B cell (primary cell): ENCODE measurements at regions of chr2 and their contacts with region 1.

Region 1: DNA sequence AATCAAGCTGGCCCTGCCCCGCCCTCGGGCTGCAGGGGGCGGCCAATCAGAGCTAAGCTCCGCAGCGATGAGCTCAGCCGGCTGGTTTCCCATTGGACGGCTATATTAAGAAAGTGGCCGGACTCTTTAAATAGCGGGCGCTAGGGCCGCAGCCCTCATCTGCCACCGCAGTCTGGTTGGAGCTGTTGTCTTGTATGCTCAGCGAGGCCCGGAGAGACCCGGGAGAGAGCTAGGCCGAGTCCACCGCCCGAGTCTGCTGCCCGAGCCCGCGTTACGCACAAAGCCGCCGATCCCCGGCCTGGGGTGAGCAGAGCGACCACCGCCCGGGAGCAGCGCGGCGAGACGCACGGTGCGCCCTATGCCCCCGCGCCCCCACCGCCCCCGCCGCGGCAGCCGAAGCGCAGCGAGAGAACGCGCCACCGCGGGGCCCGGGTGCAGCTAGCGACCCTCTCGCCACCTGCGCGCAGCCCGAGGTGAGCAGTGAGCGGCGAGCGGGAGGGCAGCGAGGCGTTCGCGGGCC is at the start of gene RHOB:
- DNase-seq: peak; percentile 98
- ATAC-seq: peak; percentile 92
- H3K4me3 ChIP-seq: peak within 1 kb of the TSS; percentile 65 to 79 (median 70)
- H3K4me3 Mint-ChIP-seq: peak within 1 kb of the TSS; percentile 95
- H3K27ac ChIP-seq: peak within 1 kb of the TSS; percentile 69 to 92
- H3K27ac Mint-ChIP-seq: peak within 1 kb of the TSS; percentile 96
- H3K4me1 ChIP-seq: peaks cover 15 to 20% of the 10 kb centered on the region in 2 donors
- H3K4me1 Mint-ChIP-seq: peaks cover 18% of the 10 kb centered on the region
- H3K27me3 ChIP-seq: peaks cover 0 to 21% (median 7%) of the 10 kb centered on the region in 4 experiments
- H3K27me3 Mint-ChIP-seq: peaks cover 14% of the 10 kb centered on the region
- CTCF ChIP-seq: no peak
- total RNA-seq, gene RHOB: 63.0 and 65.0 TPM in 2 replicates

Region 2: DNA sequence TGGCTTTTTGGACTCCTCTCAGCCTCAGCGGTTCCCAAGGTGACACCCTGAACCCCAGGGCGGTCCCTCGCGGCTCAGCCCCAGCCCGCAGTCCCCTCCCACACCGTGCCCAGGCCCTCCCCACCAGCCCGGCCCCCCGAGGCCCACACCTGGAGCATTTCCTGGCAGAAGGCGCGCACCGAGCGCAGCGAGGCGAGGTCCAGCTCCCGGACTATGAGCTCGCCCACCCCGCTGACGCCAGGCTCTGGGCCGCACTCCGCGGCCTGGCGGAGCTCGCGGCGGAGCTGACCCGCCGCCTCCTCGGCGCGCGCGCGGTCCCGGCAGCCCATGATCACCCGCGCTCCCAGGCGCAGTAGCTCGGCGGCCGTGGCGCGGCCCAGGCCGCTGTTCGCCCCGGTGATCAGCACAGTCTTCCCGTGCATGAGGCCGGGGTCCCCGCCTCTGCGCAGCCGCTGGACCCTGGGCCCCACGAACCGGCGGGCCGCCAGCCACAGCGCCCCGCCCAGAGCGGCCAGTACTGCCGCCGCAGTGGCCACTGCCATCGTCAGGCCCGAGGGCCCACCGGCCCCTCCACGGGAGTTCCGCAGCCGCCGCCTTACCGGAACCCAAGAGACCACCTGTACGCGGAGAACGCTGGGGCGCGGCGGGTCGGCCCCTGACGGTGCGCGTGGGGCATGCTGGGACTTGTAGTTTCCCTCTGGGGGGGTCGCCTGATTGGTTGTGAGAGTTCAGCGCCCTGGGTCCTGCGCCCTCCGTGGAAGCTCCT is 1886.8 kb before region 1 on chr2 and contains the start of gene RDH14:
- CTCF ChIA-PET with region 1: no interaction called
- POLR2A ChIA-PET with region 1: no interaction called
- intact Hi-C with region 1: loop called (anchors 5 kb)
- DNase-seq: peak; percentile 94
- ATAC-seq: peak; percentile 90
- H3K4me3 ChIP-seq: peak within 1 kb of the TSS; percentile 34 to 79 (median 69)
- H3K4me3 Mint-ChIP-seq: peak within 1 kb of the TSS; percentile 93
- H3K27ac ChIP-seq: peak within 1 kb of the TSS; percentile 71 to 93
- H3K27ac Mint-ChIP-seq: peak within 1 kb of the TSS; percentile 94
- H3K4me1 ChIP-seq: peaks cover 12 to 13% of the 10 kb centered on the region in 2 donors
- H3K4me1 Mint-ChIP-seq: peaks cover 39% of the 10 kb centered on the region
- H3K27me3 ChIP-seq: no peaks in the 10 kb centered on the region
- H3K27me3 Mint-ChIP-seq: no peaks in the 10 kb centered on the region
- CTCF ChIP-seq: no peak
- total RNA-seq, gene RDH14: 18.5 and 19.4 TPM in 2 replicates

Region 3: DNA sequence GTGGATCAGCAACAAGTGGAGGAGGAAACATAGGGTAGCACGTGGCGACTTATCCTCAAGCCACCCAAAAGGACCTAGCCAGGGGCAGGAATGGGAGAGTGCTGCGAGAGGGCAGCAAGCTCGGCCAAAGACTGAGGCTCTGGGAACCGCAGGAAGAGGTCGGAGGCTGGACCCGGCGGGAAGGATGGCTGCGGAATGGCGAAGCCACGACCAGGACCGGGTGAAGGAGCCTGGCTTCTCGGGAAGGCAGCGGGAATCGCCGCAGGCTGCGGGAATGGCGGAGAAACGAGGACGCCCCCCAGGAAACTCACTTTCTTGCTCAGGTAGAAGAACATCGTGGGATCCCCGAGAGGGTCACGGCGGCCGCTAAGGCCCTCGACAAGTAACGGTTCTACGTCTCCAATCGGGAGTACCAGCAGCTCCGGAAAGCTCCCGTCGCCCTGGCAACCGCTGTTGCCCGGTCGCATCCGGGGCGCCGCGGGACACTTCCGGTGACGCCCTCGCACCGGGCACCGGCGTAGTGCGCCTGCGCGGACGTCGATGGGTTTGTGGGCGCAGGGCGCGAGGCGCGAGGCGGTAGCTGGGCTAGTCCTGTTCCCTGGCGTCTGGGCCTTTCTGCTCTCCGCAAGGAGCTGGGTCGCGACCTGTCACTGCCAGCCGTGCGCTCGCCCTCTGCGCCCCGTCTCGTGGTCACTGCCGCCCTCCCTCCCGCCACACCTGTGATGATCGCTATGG is 457.1 kb before region 1 on chr2 and contains the start of gene WDR35:
- CTCF ChIA-PET with region 1: no interaction called
- POLR2A ChIA-PET with region 1: no interaction called
- intact Hi-C with region 1: loop called (anchors 10 kb)
- DNase-seq: peak; percentile 92
- ATAC-seq: peak; percentile 88
- H3K4me3 ChIP-seq: peak within 1 kb of the TSS; percentile 68 to 93 (median 88)
- H3K4me3 Mint-ChIP-seq: peak within 1 kb of the TSS; percentile 91
- H3K27ac ChIP-seq: peak within 1 kb of the TSS; percentile 69 to 77
- H3K27ac Mint-ChIP-seq: peak within 1 kb of the TSS; percentile 89
- H3K4me1 ChIP-seq: peaks cover 16 to 22% of the 10 kb centered on the region in 2 donors
- H3K4me1 Mint-ChIP-seq: peaks cover 28% of the 10 kb centered on the region
- H3K27me3 ChIP-seq: peaks cover 0 to 7% (median 2%) of the 10 kb centered on the region in 4 experiments
- H3K27me3 Mint-ChIP-seq: peaks cover 21% of the 10 kb centered on the region
- CTCF ChIP-seq: no peak
- total RNA-seq, gene WDR35: 9.4 and 11.8 TPM in 2 replicates

Region 4: DNA sequence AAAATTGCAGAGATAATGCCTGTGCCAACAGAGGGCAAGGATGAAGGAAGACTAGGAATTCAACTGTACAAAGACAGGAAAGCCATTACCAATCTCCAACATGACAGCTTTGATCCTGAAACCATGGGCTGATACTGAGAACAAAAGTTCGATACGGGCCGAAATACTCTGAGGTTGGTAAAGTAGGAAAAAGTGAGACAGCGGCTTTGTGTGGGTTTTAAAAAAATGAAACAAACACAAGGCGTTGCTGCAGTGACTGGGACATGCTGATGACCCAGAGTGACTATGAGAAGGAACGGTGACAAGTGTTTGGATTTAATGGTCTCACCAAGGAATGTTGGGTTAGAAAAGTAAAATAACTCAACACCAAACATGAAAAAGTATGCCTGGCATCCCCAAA is 197.8 kb before region 1 on chr2:
- CTCF ChIA-PET with region 1: no interaction called
- POLR2A ChIA-PET with region 1: no interaction called
- intact Hi-C with region 1: no loop called
- DNase-seq: no peak
- ATAC-seq: no peak
- H3K4me3 ChIP-seq: no peak overlapping the region
- H3K4me3 Mint-ChIP-seq: no peak overlapping the region
- H3K27ac ChIP-seq: no peak overlapping the region
- H3K27ac Mint-ChIP-seq: no peak overlapping the region
- H3K4me1 ChIP-seq: no peaks in the 10 kb centered on the region
- H3K4me1 Mint-ChIP-seq: no peaks in the 10 kb centered on the region
- H3K27me3 ChIP-seq: no peaks in the 10 kb centered on the region
- H3K27me3 Mint-ChIP-seq: no peaks in the 10 kb centered on the region
- CTCF ChIP-seq: no peak

Region 5: DNA sequence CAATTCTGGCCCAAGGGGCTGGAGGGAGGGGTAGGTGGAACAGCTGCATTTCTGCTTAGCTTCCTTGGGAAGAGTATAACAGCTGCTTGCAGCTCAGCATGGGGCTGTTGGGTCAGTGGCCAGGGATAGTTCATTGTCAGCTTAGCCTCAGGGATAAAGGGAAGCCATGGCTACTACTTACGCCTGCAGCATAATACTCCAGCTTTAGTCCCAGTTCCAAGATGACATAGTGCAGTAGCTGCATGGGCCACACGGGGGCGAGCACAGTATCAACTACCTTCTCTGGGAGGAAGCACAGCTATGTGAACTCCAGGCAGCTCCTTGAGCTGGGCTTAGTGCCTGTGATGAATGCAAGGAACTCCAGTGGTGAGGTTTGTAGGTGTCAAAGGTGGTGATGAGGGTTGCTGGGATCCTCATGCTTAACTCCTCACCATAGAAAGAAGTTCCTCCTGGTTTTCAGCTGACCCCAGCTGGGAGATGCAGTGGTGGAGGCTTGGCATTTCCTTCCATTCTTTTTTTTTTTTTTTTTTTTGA is 35.5 kb before region 1 on chr2:
- CTCF ChIA-PET with region 1: interaction called, 19 read pairs
- POLR2A ChIA-PET with region 1: interaction called, 5 read pairs
- intact Hi-C with region 1: loop called (anchors 5 kb)
- DNase-seq: peak; percentile 82
- ATAC-seq: peak; percentile 99
- H3K4me3 ChIP-seq: no peak overlapping the region
- H3K4me3 Mint-ChIP-seq: no peak overlapping the region
- H3K27ac ChIP-seq: no peak overlapping the region
- H3K27ac Mint-ChIP-seq: no peak overlapping the region
- H3K4me1 ChIP-seq: no peaks in the 10 kb centered on the region
- H3K4me1 Mint-ChIP-seq: peaks cover 2% of the 10 kb centered on the region
- H3K27me3 ChIP-seq: peaks cover 0 to 12% (median 3%) of the 10 kb centered on the region in 4 experiments
- H3K27me3 Mint-ChIP-seq: peaks cover 9% of the 10 kb centered on the region
- CTCF ChIP-seq: peak; percentile 80

Region 6: DNA sequence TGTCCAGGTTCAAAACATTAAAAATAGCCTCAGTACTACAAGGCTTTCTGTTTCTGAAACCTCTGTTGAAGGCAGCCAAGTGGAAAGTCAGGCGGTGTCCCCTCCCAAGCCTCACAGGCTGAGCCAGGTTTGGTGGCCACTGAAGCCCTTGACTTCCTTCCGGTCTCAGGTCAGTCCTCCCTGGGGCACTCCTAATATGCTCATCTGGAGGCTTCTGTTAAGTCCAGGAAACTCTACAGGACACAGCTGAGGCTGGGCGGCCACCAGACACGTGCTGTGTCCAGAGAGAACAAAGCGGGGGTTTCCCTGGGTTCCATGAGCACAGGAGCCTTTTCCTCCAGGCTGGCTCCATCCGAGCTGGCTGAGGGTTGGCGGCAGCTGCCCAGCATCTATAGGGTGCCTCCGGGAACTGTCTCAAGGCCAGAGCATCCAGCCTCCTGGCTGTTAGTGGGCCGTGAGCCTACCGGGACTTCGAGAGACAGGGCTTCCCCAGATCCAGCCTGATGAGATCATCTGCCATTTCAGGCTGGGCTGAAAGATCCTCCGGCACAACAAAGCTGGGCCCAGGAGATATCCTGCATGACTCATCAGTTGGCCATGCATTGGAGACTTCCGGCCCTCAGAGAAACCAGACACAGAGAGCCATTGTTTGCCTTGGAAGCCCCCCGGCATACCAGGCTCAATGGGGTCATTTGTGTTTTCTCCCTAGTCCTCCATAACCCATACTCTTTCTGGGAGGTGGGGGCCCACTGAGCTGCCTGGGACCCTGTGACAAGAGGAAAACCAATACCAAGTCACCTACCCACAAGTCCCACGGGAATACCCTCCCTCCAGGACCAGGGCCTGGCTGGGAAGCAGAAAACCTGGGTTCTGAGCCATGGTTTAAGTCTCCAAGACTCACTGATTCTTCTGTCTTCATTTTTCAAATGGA is 132.2 kb after region 1 on chr2:
- CTCF ChIA-PET with region 1: interaction called, 7 read pairs
- POLR2A ChIA-PET with region 1: interaction called, 7 read pairs
- intact Hi-C with region 1: loop called (anchors 5 kb)
- DNase-seq: no peak
- ATAC-seq: no peak
- H3K4me3 ChIP-seq: no peak overlapping the region
- H3K4me3 Mint-ChIP-seq: no peak overlapping the region
- H3K27ac ChIP-seq: no peak overlapping the region
- H3K27ac Mint-ChIP-seq: no peak overlapping the region
- H3K4me1 ChIP-seq: peaks cover 27 to 34% of the 10 kb centered on the region in 2 donors
- H3K4me1 Mint-ChIP-seq: peaks cover 23% of the 10 kb centered on the region
- H3K27me3 ChIP-seq: no peaks in the 10 kb centered on the region
- H3K27me3 Mint-ChIP-seq: no peaks in the 10 kb centered on the region
- CTCF ChIP-seq: no peak

Region 7: GRCh38 chr2:20642055-20642971 is 195.3 kb after region 1 on chr2:
- CTCF ChIA-PET with region 1: interaction called, 114 read pairs
- POLR2A ChIA-PET with region 1: interaction called, 16 read pairs
- intact Hi-C with region 1: loop called (anchors 1 kb)
- DNase-seq: peak; percentile 82
- ATAC-seq: peak; percentile 99
- H3K4me3 ChIP-seq: no peak overlapping the region
- H3K4me3 Mint-ChIP-seq: no peak overlapping the region
- H3K27ac ChIP-seq: no peak overlapping the region
- H3K27ac Mint-ChIP-seq: no peak overlapping the region
- H3K4me1 ChIP-seq: peaks cover 3 to 13% of the 10 kb centered on the region in 2 donors
- H3K4me1 Mint-ChIP-seq: peaks cover 12% of the 10 kb centered on the region
- H3K27me3 ChIP-seq: no peaks in the 10 kb centered on the region
- H3K27me3 Mint-ChIP-seq: no peaks in the 10 kb centered on the region
- CTCF ChIP-seq: peak; percentile 92

Region 8: DNA sequence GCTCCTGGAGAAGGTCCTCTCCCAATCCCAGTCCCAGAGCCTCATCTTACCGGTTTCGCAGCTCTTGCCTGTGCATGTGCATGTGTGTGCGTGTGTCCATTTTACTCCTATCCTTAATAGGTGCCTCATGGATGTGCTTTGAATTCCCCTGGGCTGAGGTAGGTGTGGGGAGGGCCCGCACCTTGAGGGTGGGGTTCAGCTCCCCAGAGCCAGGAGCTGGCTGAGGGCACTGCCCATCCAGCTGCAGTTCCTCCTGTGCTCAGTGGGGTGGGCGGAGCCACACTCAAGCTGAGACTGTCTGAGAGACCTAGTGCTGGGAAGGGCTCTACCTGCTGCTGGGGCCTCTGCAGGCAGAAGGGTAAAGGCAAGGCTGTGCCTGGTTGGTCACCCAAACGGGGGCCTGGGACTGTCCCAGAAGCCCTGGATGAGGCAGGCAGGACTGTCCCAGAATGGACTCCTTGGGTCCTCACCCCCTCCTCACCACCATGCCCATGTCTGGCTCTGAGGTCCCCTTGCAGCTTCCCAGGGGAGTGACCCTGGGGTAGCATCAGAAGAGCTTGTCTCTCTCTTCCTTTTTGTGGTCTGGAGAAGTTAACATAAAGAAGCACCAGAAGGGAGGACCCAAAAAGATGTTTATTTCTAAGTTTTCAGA is 228.8 kb after region 1 on chr2:
- CTCF ChIA-PET with region 1: interaction called, 5 read pairs
- POLR2A ChIA-PET with region 1: interaction called, 19 read pairs
- intact Hi-C with region 1: no loop called
- DNase-seq: peak; percentile 83
- ATAC-seq: peak; percentile 79
- H3K4me3 ChIP-seq: peak overlapping the region in 1 of 5 experiments; percentile 15
- H3K4me3 Mint-ChIP-seq: peak overlapping the region; percentile 80
- H3K27ac ChIP-seq: peak overlapping the region; percentile 63 to 82
- H3K27ac Mint-ChIP-seq: peak overlapping the region; percentile 98
- H3K4me1 ChIP-seq: peaks cover 35 to 86% of the 10 kb centered on the region in 2 donors
- H3K4me1 Mint-ChIP-seq: peaks cover 59% of the 10 kb centered on the region
- H3K27me3 ChIP-seq: peaks cover 0 to 16% (median 4%) of the 10 kb centered on the region in 4 experiments
- H3K27me3 Mint-ChIP-seq: no peaks in the 10 kb centered on the region
- CTCF ChIP-seq: no peak